ENCODE measurements at regions of chr5 and their contacts with region 1.

Region 1: GRCh38 chr5:177071666-177072385 is 14.9 kb upstream of the FGFR4 start:
- DNase-seq: peak; percentile 86
- H3K4me3 ChIP-seq: no peak overlapping the region
- H3K27ac ChIP-seq: no peak overlapping the region
- H3K4me1 ChIP-seq: no peaks in the 10 kb centered on the region
- H3K27me3 ChIP-seq: no peaks in the 10 kb centered on the region
- CTCF ChIP-seq: peak; percentile 77 to 80
- POLR2A ChIP-seq: no peak

Region 2: DNA sequence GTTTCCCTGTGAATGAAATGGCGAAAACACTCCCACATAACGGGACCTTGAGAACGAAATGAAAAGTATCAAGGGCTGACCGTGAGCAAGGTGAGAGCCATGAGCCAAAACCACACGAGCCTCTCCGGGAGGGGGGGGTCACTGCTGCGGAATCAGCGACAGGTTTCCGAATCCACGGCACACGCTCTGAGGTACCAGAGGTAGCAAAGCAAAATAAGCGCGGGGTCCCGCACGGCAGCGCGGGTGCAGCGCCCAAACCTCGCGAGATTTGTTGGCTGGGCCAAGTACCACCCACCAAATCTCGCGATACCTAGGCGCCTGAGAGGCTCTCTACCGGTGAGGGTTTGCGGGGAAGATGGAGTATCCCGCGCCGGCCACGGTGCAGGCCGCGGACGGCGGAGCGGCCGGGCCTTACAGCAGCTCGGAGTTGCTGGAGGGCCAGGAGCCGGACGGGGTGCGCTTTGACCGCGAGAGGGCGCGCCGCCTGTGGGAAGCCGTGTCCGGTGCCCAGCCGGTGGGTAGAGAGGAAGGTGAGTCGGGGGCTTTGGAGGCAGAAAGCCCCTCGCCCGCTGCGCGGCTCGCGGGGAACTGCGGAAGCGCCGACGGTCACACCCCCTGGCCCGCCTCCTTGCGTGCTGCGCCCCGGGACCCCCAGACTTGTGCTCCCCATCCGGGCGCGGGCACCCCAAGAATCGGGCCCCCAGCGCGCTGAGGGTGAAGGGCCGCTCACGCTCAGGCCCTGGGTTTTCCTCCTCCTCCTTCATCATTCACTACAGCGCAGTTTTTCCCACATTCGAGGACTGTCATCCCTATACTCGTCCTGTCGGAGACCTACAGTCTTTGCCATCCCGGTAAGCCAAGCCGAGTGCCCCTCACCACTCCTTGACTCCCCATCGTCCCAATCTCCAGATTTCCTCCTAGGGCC is 49.2 kb before region 1 on chr5 and contains the start of gene ZNF346:
- CTCF ChIA-PET with region 1: interaction called, 11 read pairs
- POLR2A ChIA-PET with region 1: no interaction called
- dilution Hi-C with region 1: no loop called
- intact Hi-C with region 1: no loop called
- DNase-seq: peak; percentile 88
- H3K4me3 ChIP-seq: peak within 1 kb of the TSS; percentile 57 to 94 (median 87)
- H3K27ac ChIP-seq: peak within 1 kb of the TSS; percentile 51
- H3K4me1 ChIP-seq: peaks cover 9% of the 10 kb centered on the region
- H3K27me3 ChIP-seq: no peaks in the 10 kb centered on the region
- CTCF ChIP-seq: peak; percentile 23 to 58
- POLR2A ChIP-seq: peak; percentile 92
- total RNA-seq, gene ZNF346: 28.6 and 35.2 TPM in 2 replicates

Region 3: GRCh38 chr5:177043958-177044357 is 27.9 kb before region 1 on chr5:
- CTCF ChIA-PET with region 1: interaction called, 16 read pairs
- POLR2A ChIA-PET with region 1: no interaction called
- dilution Hi-C with region 1: no loop called
- intact Hi-C with region 1: no loop called
- DNase-seq: peak; percentile 75
- H3K4me3 ChIP-seq: no peak overlapping the region
- H3K27ac ChIP-seq: no peak overlapping the region
- H3K4me1 ChIP-seq: peaks cover 8% of the 10 kb centered on the region
- H3K27me3 ChIP-seq: no peaks in the 10 kb centered on the region
- CTCF ChIP-seq: no peak
- POLR2A ChIP-seq: no peak

Region 4: DNA sequence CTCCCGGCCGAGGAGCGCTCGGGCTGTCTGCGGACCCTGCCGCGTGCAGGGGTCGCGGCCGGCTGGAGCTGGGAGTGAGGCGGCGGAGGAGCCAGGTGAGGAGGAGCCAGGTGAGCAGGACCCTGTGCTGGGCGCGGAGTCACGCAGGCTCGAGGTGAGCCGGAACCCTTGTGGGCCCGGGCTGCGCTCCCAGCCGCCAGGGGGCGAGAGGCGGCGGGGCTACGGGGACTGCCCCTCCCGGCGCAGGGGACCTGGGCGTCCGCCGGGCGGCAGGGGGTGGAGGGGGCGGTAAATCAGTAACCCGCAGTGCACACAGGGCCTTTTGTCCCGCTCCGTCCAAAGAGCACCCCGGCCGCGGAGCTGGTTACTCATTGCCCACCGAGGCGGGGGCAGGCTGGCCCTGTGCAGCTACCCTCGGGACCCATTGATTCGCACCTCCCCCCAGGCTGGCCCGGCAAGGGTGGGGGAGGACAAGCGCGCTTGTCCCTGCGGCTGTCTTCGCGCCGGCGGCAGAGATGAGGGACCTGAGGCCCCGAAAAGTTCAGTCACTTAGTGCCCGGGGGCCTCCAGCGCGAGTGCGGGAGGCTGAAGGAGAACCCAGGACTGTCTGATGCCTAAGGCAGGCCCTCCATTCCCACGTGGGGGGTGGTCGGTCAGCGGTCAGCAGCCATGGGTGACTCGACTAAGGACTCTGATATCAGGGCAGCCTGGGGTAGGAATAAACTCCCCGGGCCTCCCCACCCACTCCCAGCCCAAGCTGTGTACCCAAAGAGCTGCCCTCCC is 15.3 kb after region 1 on chr5:
- CTCF ChIA-PET with region 1: interaction called, 94 read pairs
- POLR2A ChIA-PET with region 1: no interaction called
- dilution Hi-C with region 1: no loop called
- intact Hi-C with region 1: no loop called
- DNase-seq: peak; percentile 39
- H3K4me3 ChIP-seq: peak overlapping the region in 1 of 3 experiments; percentile 19
- H3K27ac ChIP-seq: no peak overlapping the region
- H3K4me1 ChIP-seq: peaks cover 15% of the 10 kb centered on the region
- H3K27me3 ChIP-seq: peaks cover 3 to 7% of the 10 kb centered on the region in 2 experiments
- CTCF ChIP-seq: peak; percentile 49 to 71
- POLR2A ChIP-seq: no peak

Region 5: GRCh38 chr5:177098470-177099141 is 26.8 kb after region 1 on chr5:
- CTCF ChIA-PET with region 1: interaction called, 15 read pairs
- POLR2A ChIA-PET with region 1: no interaction called
- dilution Hi-C with region 1: no loop called
- intact Hi-C with region 1: no loop called
- DNase-seq: no peak
- H3K4me3 ChIP-seq: no peak overlapping the region
- H3K27ac ChIP-seq: no peak overlapping the region
- H3K4me1 ChIP-seq: peaks cover 20% of the 10 kb centered on the region
- H3K27me3 ChIP-seq: no peaks in the 10 kb centered on the region
- CTCF ChIP-seq: no peak
- POLR2A ChIP-seq: no peak

Region 6: GRCh38 chr5:177194274-177194673 is 122.4 kb after region 1 on chr5:
- CTCF ChIA-PET with region 1: no interaction called
- POLR2A ChIA-PET with region 1: interaction called, 12 read pairs
- dilution Hi-C with region 1: no loop called
- intact Hi-C with region 1: no loop called
- DNase-seq: peak; percentile 79
- H3K4me3 ChIP-seq: no peak overlapping the region
- H3K27ac ChIP-seq: peak overlapping the region; percentile 90
- H3K4me1 ChIP-seq: peaks cover 24% of the 10 kb centered on the region
- H3K27me3 ChIP-seq: no peaks in the 10 kb centered on the region
- CTCF ChIP-seq: no peak
- POLR2A ChIP-seq: no peak